Posterior vena cava (tissue), 2 donors: ENCODE measurements at regions of chr9 and their contacts with region 1.

Region 1: GRCh38 chr9:116313638-116314037 is 160.0 kb downstream of the PAPPA start:
- DNase-seq: no peak

Region 2: GRCh38 chr9:116355153-116355921 is 41.7 kb after region 1 on chr9:
- intact Hi-C with region 1: loop called in 1 of 2 experiments (anchors 1 kb)
- DNase-seq: no peak

Region 3: GRCh38 chr9:117044241-117044640 is 730.6 kb after region 1 on chr9:
- intact Hi-C with region 1: loop called in 1 of 2 experiments (anchors 5 kb)
- DNase-seq: no peak